Activated CD8-positive, alpha-beta T cell treated with anti-CD3 and anti-CD28 coated beads, Interleukin-2, amount 10 ng/mL, durations not matched to agents 7 days and 5 days (primary cell): ENCODE measurements at regions of chr1 and their contacts with region 1.

Region 1: GRCh38 chr1:89632657-89633247 is at the start of gene LRRC8C:
- DNase-seq: peak; percentile 89
- ATAC-seq: peak; percentile 81
- H3K4me3 Mint-ChIP-seq: peak within 1 kb of the TSS; percentile 89
- H3K27ac Mint-ChIP-seq: peak within 1 kb of the TSS; percentile 95
- H3K4me1 Mint-ChIP-seq: peaks cover 71% of the 10 kb centered on the region
- H3K27me3 Mint-ChIP-seq: no peaks in the 10 kb centered on the region
- total RNA-seq, gene LRRC8C: 32.9 to 35.0 TPM

Region 2: GRCh38 chr1:89454845-89455521 is 177.8 kb before region 1 on chr1:
- CTCF ChIA-PET with region 1: no interaction called
- POLR2A ChIA-PET with region 1: no interaction called
- DNase-seq: peak; percentile 79
- ATAC-seq: peak; percentile 75
- H3K4me3 Mint-ChIP-seq: no peak overlapping the region
- H3K27ac Mint-ChIP-seq: no peak overlapping the region
- H3K4me1 Mint-ChIP-seq: peaks cover 13% of the 10 kb centered on the region
- H3K27me3 Mint-ChIP-seq: peaks cover 32% of the 10 kb centered on the region

Region 3: DNA sequence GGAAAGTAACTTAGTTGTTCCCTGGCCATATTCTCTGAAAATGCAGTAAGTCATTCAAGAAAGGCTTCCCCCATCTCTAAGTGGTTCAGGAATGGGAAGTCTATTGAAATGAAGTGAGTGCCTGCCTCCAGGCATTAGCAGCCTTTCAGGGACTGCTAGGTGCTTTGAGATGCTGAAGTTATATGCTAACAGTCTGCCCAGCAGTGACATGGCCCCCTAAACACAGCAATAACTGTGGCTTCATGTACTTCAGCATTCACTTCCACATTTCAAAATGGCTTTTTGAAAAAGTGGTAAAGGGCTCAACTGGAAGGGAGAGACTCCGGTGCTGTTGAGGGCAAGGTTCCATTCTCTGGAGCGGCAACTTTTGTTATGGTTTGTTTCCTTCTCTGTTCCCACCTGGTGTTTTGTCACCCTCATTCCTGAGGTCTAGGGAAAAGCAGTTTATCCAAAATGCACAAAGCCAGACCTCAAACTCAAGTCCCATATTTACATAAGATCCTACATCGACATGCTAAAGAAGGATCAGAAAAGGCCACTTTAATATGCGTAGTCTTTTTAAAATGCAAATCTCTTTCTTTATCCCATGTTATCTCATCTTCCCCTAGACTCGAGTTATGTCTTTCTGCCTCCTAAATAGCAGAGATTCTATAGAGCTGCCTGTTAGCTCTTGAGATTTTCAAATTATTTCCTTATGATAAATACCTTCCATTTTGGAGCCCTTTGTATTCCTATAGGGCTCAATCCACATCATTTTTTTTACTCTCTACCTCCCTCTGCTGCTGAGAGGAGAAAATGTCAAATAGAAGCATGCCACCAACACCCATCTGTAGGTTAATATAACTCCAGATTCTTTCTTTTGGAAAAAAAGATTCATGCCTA is 34.1 kb before region 1 on chr1:
- CTCF ChIA-PET with region 1: interaction called, 62 read pairs
- POLR2A ChIA-PET with region 1: interaction called, 201 read pairs
- DNase-seq: no peak
- ATAC-seq: peak; percentile 63
- H3K4me3 Mint-ChIP-seq: no peak overlapping the region
- H3K27ac Mint-ChIP-seq: no peak overlapping the region
- H3K4me1 Mint-ChIP-seq: peaks cover 45% of the 10 kb centered on the region
- H3K27me3 Mint-ChIP-seq: no peaks in the 10 kb centered on the region

Region 4: GRCh38 chr1:89649783-89650182 is 17.0 kb after region 1 on chr1:
- CTCF ChIA-PET with region 1: interaction called, 80 read pairs
- POLR2A ChIA-PET with region 1: interaction called, 19 read pairs
- DNase-seq: no peak
- ATAC-seq: no peak
- H3K4me3 Mint-ChIP-seq: no peak overlapping the region
- H3K27ac Mint-ChIP-seq: peak overlapping the region; percentile 62
- H3K4me1 Mint-ChIP-seq: peaks cover 70% of the 10 kb centered on the region
- H3K27me3 Mint-ChIP-seq: no peaks in the 10 kb centered on the region

Region 5: GRCh38 chr1:89719502-89720306 is 87.0 kb after region 1 on chr1:
- CTCF ChIA-PET with region 1: interaction called, 12 read pairs
- POLR2A ChIA-PET with region 1: interaction called, 9 read pairs
- DNase-seq: no peak
- ATAC-seq: peak; percentile 82
- H3K4me3 Mint-ChIP-seq: peak overlapping the region; percentile 61
- H3K27ac Mint-ChIP-seq: peak overlapping the region; percentile 97
- H3K4me1 Mint-ChIP-seq: peaks cover 83% of the 10 kb centered on the region
- H3K27me3 Mint-ChIP-seq: no peaks in the 10 kb centered on the region

Region 6: GRCh38 chr1:89780721-89781120 is 148.0 kb after region 1 on chr1:
- CTCF ChIA-PET with region 1: interaction called, 14 read pairs
- POLR2A ChIA-PET with region 1: no interaction called
- DNase-seq: no peak
- ATAC-seq: peak; percentile 74
- H3K4me3 Mint-ChIP-seq: no peak overlapping the region
- H3K27ac Mint-ChIP-seq: peak overlapping the region; percentile 43
- H3K4me1 Mint-ChIP-seq: peaks cover 25% of the 10 kb centered on the region
- H3K27me3 Mint-ChIP-seq: no peaks in the 10 kb centered on the region